CD14-positive monocyte (primary cell): ENCODE measurements at regions of chr4 and their contacts with region 1.

Region 1: GRCh38 chr4:184460499-184461285 is 13.7 kb downstream of the IRF2 start:
- DNase-seq: peak in 2 of 3 donors; percentile 19 to 25
- H3K4me3 ChIP-seq: peak overlapping the region in 1 of 3 experiments; percentile 50
- H3K4me3 Mint-ChIP-seq: peak overlapping the region in 1 of 2 donors; percentile 27
- H3K27ac ChIP-seq: peak overlapping the region in 1 of 2 donors; percentile 37
- H3K27ac Mint-ChIP-seq: peak overlapping the region in 2 of 7 donors; percentile 14 to 81
- H3K4me1 ChIP-seq: peaks cover 15 to 22% of the 10 kb centered on the region in 2 donors
- H3K4me1 Mint-ChIP-seq: peaks cover 54% of the 10 kb centered on the region
- H3K27me3 ChIP-seq: no peaks in the 10 kb centered on the region
- H3K27me3 Mint-ChIP-seq: no peaks in the 10 kb centered on the region
- CTCF ChIP-seq: no peak

Region 2: DNA sequence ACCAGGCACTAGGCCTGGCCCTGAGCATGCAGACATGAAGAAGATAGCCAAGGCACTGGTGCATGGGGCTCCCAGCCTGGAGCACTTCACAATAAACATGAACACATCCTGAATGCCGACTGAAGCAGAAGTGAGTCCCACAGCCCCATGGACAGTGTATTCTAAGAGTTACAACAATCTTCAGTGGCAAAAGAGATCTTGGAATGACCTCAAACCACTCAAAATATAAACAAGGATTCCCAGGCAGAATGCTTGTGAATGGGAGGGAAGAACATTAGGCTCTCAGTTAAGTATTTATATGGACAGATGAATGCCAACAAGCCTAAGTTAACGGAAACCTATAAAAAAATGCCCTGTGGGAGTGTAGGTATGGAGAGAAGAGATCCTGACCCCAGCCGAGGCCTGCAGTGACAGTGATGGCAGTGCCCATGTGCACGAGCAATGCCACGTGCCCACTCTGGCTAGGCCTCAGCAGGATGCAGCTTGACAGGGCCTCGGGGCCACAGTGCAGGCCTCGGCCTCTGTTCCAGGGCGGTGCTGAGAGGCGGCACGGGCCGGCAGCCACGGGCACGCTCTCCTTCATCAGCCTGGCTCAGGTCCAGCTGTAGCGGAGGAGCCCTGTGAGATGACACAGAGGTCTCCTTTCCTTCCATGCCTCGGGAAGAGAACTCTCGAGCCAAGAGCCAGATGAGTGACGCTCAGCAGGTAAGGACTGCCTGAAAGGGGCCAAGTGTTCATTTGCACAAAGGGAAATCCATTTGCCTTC is 35.5 kb before region 1 on chr4:
- intact Hi-C with region 1: loop called in 1 of 2 experiments (anchors 5 kb)
- DNase-seq: no peak
- H3K4me3 ChIP-seq: no peak overlapping the region
- H3K4me3 Mint-ChIP-seq: no peak overlapping the region
- H3K27ac ChIP-seq: peak overlapping the region in 1 of 2 donors; percentile 37
- H3K27ac Mint-ChIP-seq: peak overlapping the region in 3 of 7 donors; percentile 48 to 74 (median 74)
- H3K4me1 ChIP-seq: peaks cover 20% of the 10 kb centered on the region in 2 donors
- H3K4me1 Mint-ChIP-seq: peaks cover 33% of the 10 kb centered on the region
- H3K27me3 ChIP-seq: no peaks in the 10 kb centered on the region
- H3K27me3 Mint-ChIP-seq: peaks cover 0 to 2% (median 0%) of the 10 kb centered on the region in 3 donors
- CTCF ChIP-seq: no peak